HCT116 (cell line): ENCODE measurements at regions of chr22 and their contacts with region 1.

Region 1: GRCh38 chr22:21641789-21642583 is at the start of gene SDF2L1:
- DNase-seq: peak; percentile 96
- ATAC-seq: peak; percentile 92
- H3K4me3 ChIP-seq: peak within 1 kb of the TSS; percentile 88 to 93
- H3K27ac ChIP-seq: peak within 1 kb of the TSS; percentile 81
- H3K4me1 ChIP-seq: peaks cover 12 to 35% of the 10 kb centered on the region in 2 experiments
- H3K27me3 ChIP-seq: no peaks in the 10 kb centered on the region
- CTCF ChIP-seq: no peak
- POLR2A ChIP-seq: peak; percentile 46
- RAD21 ChIP-seq: no peak
- total RNA-seq, gene SDF2L1: 86.2 TPM

Region 2: GRCh38 chr22:21567456-21568346 is 74.3 kb before region 1 on chr22 and contains the start of gene UBE2L3:
- CTCF ChIA-PET with region 1: interaction called, 3 read pairs
- POLR2A ChIA-PET with region 1: interaction called, 9 read pairs
- RAD21 ChIA-PET with region 1: interaction called in 1 of 2 experiments, 4 read pairs
- intact Hi-C with region 1: loop called (anchors 2 kb)
- DNase-seq: peak; percentile 38
- ATAC-seq: peak; percentile 73
- H3K4me3 ChIP-seq: peak within 1 kb of the TSS; percentile 75 to 96
- H3K27ac ChIP-seq: peak within 1 kb of the TSS; percentile 91
- H3K4me1 ChIP-seq: peaks cover 26 to 67% of the 10 kb centered on the region in 2 experiments
- H3K27me3 ChIP-seq: no peaks in the 10 kb centered on the region
- CTCF ChIP-seq: no peak
- POLR2A ChIP-seq: peak; percentile 65
- RAD21 ChIP-seq: no peak
- total RNA-seq, gene UBE2L3: 55.6 TPM

Region 3: GRCh38 chr22:21593406-21594232 is 48.4 kb before region 1 on chr22:
- CTCF ChIA-PET with region 1: interaction called, 16 read pairs
- POLR2A ChIA-PET with region 1: interaction called, 3 read pairs
- RAD21 ChIA-PET with region 1: interaction called in 1 of 2 experiments, 4 read pairs
- intact Hi-C with region 1: no loop called
- DNase-seq: no peak
- ATAC-seq: peak; percentile 90
- H3K4me3 ChIP-seq: no peak overlapping the region
- H3K27ac ChIP-seq: no peak overlapping the region
- H3K4me1 ChIP-seq: no peaks in the 10 kb centered on the region
- H3K27me3 ChIP-seq: no peaks in the 10 kb centered on the region
- CTCF ChIP-seq: peak; percentile 11 to 65 (median 60); a peak in 4 of 6 replicates
- POLR2A ChIP-seq: no peak
- RAD21 ChIP-seq: peak; percentile 13; the same call in 1 of the 2 replicates

Region 4: GRCh38 chr22:21624120-21624879 is 17.7 kb before region 1 on chr22:
- CTCF ChIA-PET with region 1: interaction called, 103 read pairs
- POLR2A ChIA-PET with region 1: interaction called, 43 read pairs
- RAD21 ChIA-PET with region 1: interaction called, 3 to 7 read pairs
- intact Hi-C with region 1: no loop called
- DNase-seq: no peak
- ATAC-seq: peak; percentile 31; the same call in 1 of the 2 replicates
- H3K4me3 ChIP-seq: no peak overlapping the region
- H3K27ac ChIP-seq: peak overlapping the region; percentile 26; the same call in 1 of the 2 replicates
- H3K4me1 ChIP-seq: peaks cover 5 to 27% of the 10 kb centered on the region in 2 experiments
- H3K27me3 ChIP-seq: no peaks in the 10 kb centered on the region
- CTCF ChIP-seq: peak; percentile 31 to 91 (median 84); a peak in 5 of 6 replicates
- POLR2A ChIP-seq: no peak
- RAD21 ChIP-seq: 0 out of 2 replicates have a peak, but pooled peaks have one; percentile 18

Region 5: GRCh38 chr22:21629262-21630149 is 12.5 kb before region 1 on chr22 and contains the start of gene YDJC:
- CTCF ChIA-PET with region 1: interaction called, 103 read pairs
- POLR2A ChIA-PET with region 1: interaction called, 43 read pairs
- RAD21 ChIA-PET with region 1: interaction called, 3 to 7 read pairs
- intact Hi-C with region 1: no loop called
- DNase-seq: peak; percentile 87
- ATAC-seq: peak; percentile 81
- H3K4me3 ChIP-seq: peak within 1 kb of the TSS; percentile 86 to 91
- H3K27ac ChIP-seq: peak within 1 kb of the TSS; percentile 99
- H3K4me1 ChIP-seq: peaks cover 9 to 40% of the 10 kb centered on the region in 2 experiments
- H3K27me3 ChIP-seq: no peaks in the 10 kb centered on the region
- CTCF ChIP-seq: peak; percentile 51 to 77 (median 54); a peak in 5 of 6 replicates
- POLR2A ChIP-seq: peak; percentile 73
- RAD21 ChIP-seq: no peak
- total RNA-seq, gene YDJC: 78.3 TPM

Region 6: GRCh38 chr22:22684580-22685561 is 1042.9 kb after region 1 on chr22:
- CTCF ChIA-PET with region 1: no interaction called
- POLR2A ChIA-PET with region 1: no interaction called
- RAD21 ChIA-PET with region 1: no interaction called
- intact Hi-C with region 1: no loop called
- DNase-seq: no peak
- ATAC-seq: peak; percentile 87
- H3K4me3 ChIP-seq: no peak overlapping the region
- H3K27ac ChIP-seq: no peak overlapping the region
- H3K4me1 ChIP-seq: no peaks in the 10 kb centered on the region
- H3K27me3 ChIP-seq: no peaks in the 10 kb centered on the region
- CTCF ChIP-seq: peak; percentile 32 to 77 (median 64); a peak in 5 of 6 replicates
- POLR2A ChIP-seq: no peak
- RAD21 ChIP-seq: peak; percentile 47; the same call in 1 of the 2 replicates